Heart right ventricle (tissue), 16 donors: ENCODE measurements at regions of chr21 and their contacts with region 1.

Region 1: DNA sequence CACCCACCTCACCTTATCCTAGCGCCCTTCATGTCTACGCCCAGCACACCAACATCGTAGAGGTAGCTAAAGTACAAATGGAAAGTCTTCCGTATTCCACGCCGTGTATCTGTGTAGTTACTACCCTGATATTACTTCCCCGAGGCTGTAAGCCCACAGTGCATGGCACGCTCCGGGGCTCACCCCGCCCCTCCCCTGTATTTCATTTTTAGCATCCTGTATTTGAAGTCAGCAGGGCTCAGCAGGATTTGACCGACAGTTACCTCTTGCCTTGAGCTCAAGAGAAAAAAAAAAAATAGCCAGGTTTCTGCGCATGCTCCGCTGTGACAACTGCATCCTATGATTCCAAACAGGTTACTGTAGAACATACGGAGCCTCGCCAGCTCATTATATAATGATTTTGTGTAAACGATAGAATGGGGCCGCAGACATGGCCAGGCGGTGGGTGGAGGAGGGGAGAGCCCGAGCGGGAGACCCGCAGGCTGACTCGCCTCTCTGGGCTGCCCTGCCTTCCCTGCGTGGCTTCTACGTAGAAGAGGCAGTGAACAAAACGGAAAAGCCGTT is 1.3 kb downstream of the ABCG1 start:
- DNase-seq: peak; percentile 46 to 77
- ATAC-seq: peak; percentile 56 to 84 (median 82)
- H3K4me3 ChIP-seq: peak overlapping the region; percentile 55 to 90 (median 79)
- H3K27ac ChIP-seq: peak overlapping the region; percentile 70 to 93 (median 83)
- H3K4me1 ChIP-seq: peaks cover 3 to 43% (median 35%) of the 10 kb centered on the region in 9 donors
- H3K27me3 ChIP-seq: peaks cover 0 to 10% (median 0%) of the 10 kb centered on the region in 7 donors
- CTCF ChIP-seq: no peak

Region 2: GRCh38 chr21:42171091-42172053 is 48.8 kb before region 1 on chr21:
- intact Hi-C with region 1: loop called in 4 of 10 experiments (anchors 2 to 10 kb)
- DNase-seq: peak; percentile 47 to 68
- ATAC-seq: peak; percentile 55 to 93 (median 84)
- H3K4me3 ChIP-seq: no peak overlapping the region
- H3K27ac ChIP-seq: peak overlapping the region in 7 of 10 donors; percentile 2 to 52 (median 30)
- H3K4me1 ChIP-seq: peaks cover 0 to 19% (median 0%) of the 10 kb centered on the region in 9 donors
- H3K27me3 ChIP-seq: no peaks in the 10 kb centered on the region
- CTCF ChIP-seq: no peak

Region 3: DNA sequence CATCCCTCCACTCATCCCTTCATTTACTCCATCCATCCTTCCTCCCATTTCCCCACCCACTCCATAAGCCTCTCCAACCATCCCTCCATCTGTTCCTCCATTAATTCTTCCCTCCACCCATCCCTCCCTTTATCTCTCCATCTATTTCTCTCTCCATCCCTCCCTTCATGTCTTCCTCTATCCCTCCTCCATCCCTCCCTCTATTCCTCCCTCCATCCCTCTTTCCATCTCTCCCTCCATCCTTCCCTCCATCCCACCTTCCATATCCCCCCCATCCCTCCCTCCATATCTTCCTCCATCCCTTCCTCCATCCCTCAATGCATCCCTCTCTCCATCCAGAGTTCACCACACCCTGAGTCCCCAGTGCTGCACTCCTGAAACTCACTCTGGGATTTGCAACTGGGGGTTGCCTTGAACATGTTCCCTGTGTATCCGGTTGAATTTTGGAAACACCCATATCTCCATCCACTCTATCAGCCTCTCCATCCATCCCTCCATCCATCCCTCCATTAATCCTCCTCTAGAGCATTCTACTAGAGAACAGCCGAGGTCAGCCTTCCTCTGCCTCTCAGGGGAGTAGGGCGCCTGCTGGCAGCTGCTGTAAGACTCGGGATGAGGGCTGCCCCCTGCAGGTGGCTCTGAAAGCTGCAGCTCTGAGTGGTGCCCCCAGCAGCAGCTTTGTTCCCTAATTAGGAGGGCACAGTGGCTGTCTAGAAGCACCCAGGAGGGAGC is 38.1 kb after region 1 on chr21:
- intact Hi-C with region 1: loop called in 3 of 10 experiments (anchors 2 to 5 kb)
- DNase-seq: peak; percentile 65 to 80
- ATAC-seq: peak in 7 of 8 donors; percentile 42 to 71 (median 59)
- H3K4me3 ChIP-seq: no peak overlapping the region
- H3K27ac ChIP-seq: peak overlapping the region in 1 of 10 donors; percentile 29
- H3K4me1 ChIP-seq: peaks cover 13 to 73% (median 46%) of the 10 kb centered on the region in 9 donors
- H3K27me3 ChIP-seq: no peaks in the 10 kb centered on the region
- CTCF ChIP-seq: peak; percentile 61 to 92 (median 78)

Region 4: GRCh38 chr21:42309753-42310221 is 89.6 kb after region 1 on chr21:
- intact Hi-C with region 1: loop called in 1 of 10 experiments (anchors 10 kb)
- DNase-seq: peak; percentile 37 to 50
- ATAC-seq: peak in 7 of 8 donors; percentile 36 to 66 (median 48)
- H3K4me3 ChIP-seq: no peak overlapping the region
- H3K27ac ChIP-seq: no peak overlapping the region
- H3K4me1 ChIP-seq: peaks cover 0 to 31% (median 24%) of the 10 kb centered on the region in 9 donors
- H3K27me3 ChIP-seq: peaks cover 0 to 53% (median 15%) of the 10 kb centered on the region in 7 donors
- CTCF ChIP-seq: peak; percentile 54 to 78 (median 75)